ENCODE measurements at regions of chr16 and their contacts with region 1.

Region 1: DNA sequence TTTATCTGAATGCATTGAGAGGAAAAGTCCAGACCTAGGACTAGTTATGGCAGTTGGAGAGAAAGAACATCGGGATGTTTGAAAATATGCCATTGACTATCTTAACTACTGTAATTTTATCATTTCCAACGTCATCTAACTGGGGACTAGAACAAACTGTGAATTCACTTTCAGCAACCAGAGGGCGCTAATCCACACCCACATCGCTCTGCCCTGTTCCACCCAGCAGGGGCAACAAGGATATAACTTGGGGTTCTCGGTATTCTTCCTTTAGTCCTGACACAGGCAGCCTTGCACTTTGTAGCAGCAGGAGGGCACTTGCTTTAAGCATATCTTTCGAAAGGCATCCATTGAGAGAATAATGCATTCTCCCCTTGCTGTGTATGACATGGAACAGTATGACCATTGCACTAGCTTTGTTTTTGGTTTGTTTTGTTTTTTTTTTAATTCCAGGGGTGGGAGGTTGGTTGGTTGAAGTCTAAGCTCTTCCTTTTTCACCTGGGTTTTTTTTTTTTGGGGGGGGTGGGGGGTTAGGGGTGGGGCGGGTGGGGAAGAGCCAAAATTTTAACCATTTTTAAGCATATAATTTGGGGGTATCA is 31.5 kb downstream of the SIAH1 start:
- DNase-seq: peak; percentile 91
- H3K4me3 Mint-ChIP-seq: no peak overlapping the region
- H3K27ac Mint-ChIP-seq: peak overlapping the region; percentile 28
- H3K4me1 Mint-ChIP-seq: peaks cover 23% of the 10 kb centered on the region
- H3K27me3 Mint-ChIP-seq: no peaks in the 10 kb centered on the region

Region 2: GRCh38 chr16:48300391-48300856 is 53.2 kb before region 1 on chr16:
- intact Hi-C with region 1: no loop called
- DNase-seq: no peak
- H3K4me3 Mint-ChIP-seq: no peak overlapping the region
- H3K27ac Mint-ChIP-seq: no peak overlapping the region
- H3K4me1 Mint-ChIP-seq: no peaks in the 10 kb centered on the region
- H3K27me3 Mint-ChIP-seq: no peaks in the 10 kb centered on the region

Region 3: GRCh38 chr16:48365581-48366164 is 12.0 kb after region 1 on chr16:
- intact Hi-C with region 1: loop called (anchors 1 kb)
- DNase-seq: peak; percentile 95
- H3K4me3 Mint-ChIP-seq: peak overlapping the region; percentile 89
- H3K27ac Mint-ChIP-seq: peak overlapping the region; percentile 91
- H3K4me1 Mint-ChIP-seq: peaks cover 46% of the 10 kb centered on the region
- H3K27me3 Mint-ChIP-seq: no peaks in the 10 kb centered on the region

Region 4: GRCh38 chr16:48409839-48410611 is 56.4 kb after region 1 on chr16:
- intact Hi-C with region 1: loop called (anchors 2 kb)
- DNase-seq: no peak
- H3K4me3 Mint-ChIP-seq: no peak overlapping the region
- H3K27ac Mint-ChIP-seq: no peak overlapping the region
- H3K4me1 Mint-ChIP-seq: peaks cover 6% of the 10 kb centered on the region
- H3K27me3 Mint-ChIP-seq: peaks cover 3% of the 10 kb centered on the region

Region 5: DNA sequence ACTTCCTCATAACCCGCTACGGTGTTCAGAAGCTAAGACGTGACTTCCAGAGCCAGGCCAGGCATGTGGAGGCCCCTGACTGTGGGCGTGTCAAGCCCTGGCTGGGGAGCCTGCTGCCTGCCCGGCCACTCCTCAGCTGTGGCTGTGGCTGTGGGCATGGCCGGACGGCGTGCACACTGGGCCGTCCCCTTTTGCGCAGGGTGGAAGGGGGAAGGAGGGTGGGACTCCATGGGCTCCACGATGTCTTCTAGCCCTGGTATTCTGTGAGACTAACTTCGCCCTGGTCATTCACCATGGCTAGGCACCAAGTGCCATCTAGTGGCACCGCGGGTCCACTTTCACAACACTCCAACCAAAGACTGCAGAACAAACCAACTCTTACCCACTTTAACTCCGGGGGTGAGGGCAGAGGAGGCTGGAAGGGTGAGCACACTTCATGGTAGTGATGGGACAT is 188.4 kb after region 1 on chr16:
- intact Hi-C with region 1: loop called (anchors 2 kb)
- DNase-seq: peak; percentile 65
- H3K4me3 Mint-ChIP-seq: no peak overlapping the region
- H3K27ac Mint-ChIP-seq: no peak overlapping the region
- H3K4me1 Mint-ChIP-seq: peaks cover 14% of the 10 kb centered on the region
- H3K27me3 Mint-ChIP-seq: no peaks in the 10 kb centered on the region

Region 6: GRCh38 chr16:48632137-48632774 is 278.6 kb after region 1 on chr16:
- intact Hi-C with region 1: loop called (anchors 1 kb)
- DNase-seq: peak; percentile 48
- H3K4me3 Mint-ChIP-seq: no peak overlapping the region
- H3K27ac Mint-ChIP-seq: no peak overlapping the region
- H3K4me1 Mint-ChIP-seq: peaks cover 7% of the 10 kb centered on the region
- H3K27me3 Mint-ChIP-seq: peaks cover 2% of the 10 kb centered on the region

Region 7: DNA sequence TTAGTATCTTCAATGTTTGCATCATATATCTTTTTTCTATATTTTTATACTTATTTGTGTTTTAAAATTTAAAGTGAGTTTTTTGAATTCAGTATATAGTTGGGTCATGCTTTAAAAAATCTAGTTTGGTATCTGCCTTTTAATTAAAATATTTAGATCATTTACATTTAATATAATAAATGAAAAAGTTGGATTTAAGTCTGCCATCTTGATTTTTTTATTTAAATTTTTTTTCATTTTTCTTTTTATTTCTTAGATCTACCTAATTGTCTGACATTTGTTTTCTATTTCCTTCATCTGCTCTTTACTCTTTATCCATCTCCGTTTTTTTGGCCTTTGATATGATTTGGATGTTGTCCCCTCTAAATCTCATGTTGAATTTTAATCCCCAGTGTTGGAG is 306.3 kb after region 1 on chr16:
- intact Hi-C with region 1: no loop called
- DNase-seq: no peak
- H3K4me3 Mint-ChIP-seq: no peak overlapping the region
- H3K27ac Mint-ChIP-seq: no peak overlapping the region
- H3K4me1 Mint-ChIP-seq: no peaks in the 10 kb centered on the region
- H3K27me3 Mint-ChIP-seq: no peaks in the 10 kb centered on the region